ENCODE measurements at regions of chr6 and their contacts with region 1.

Region 1: DNA sequence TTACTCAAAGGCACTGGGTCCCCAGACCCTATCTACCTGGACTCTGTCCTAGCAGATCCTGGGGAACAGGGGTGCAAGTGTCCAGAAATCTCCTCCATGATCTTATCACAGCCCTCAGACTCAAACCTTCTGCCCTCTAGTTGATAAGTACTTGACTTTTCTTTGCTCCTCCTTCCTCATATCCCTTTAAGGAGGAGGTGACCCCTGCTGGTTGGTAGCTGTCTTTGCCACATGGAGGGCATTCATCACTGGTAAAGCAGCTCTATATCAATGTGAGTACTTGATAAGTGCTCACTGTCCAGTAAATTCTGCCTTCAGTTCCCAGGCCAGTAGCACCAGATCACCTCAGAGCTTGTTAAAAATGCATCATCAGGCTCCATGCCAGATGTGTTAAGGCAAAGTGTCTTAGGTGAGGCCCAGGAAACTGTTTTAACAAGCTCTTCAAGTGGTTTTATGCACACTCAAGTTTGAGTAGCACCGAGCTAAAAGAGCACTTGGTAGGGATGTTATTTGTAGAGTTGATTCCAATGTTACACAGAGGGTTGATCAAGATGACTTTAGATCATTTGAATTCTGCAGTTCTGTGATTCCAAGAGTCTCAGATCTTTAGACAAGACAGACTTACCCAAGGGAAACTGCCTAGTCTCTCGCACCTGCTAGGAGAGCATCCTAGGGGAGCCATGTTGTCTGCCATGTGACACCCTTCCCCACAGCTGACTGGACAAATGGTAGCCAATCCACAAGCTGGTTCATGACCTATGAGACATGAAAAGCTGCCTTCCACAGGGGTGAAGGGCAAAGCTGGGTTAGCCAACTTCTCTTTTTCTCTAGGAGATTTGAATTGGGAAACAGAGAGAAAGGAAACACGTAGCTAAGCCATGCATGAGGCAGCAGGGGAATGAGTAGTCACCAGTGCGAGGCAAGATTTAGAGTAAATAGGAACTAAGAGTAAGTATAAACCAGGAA is 18.6 kb downstream of the TREML2 start:
- DNase-seq: peak; percentile 55
- ATAC-seq: peak; percentile 98
- H3K4me3 ChIP-seq: no peak overlapping the region
- H3K27ac ChIP-seq: no peak overlapping the region
- H3K4me1 ChIP-seq: no peaks in the 10 kb centered on the region
- H3K27me3 ChIP-seq: peaks cover 16% of the 10 kb centered on the region; the same call in 1 of the 2 replicates
- CTCF ChIP-seq: peak; percentile 58
- POLR2A ChIP-seq: no peak
- RAD21 ChIP-seq: peak; percentile 49

Region 2: GRCh38 chr6:40755046-40755681 is 427.2 kb before region 1 on chr6:
- CTCF ChIA-PET with region 1: no interaction called
- POLR2A ChIA-PET with region 1: no interaction called
- dilution Hi-C with region 1: no loop called
- in situ Hi-C with region 1: no loop called
- intact Hi-C with region 1: no loop called
- DNase-seq: peak; percentile 56
- ATAC-seq: peak; percentile 62
- H3K4me3 ChIP-seq: no peak overlapping the region
- H3K27ac ChIP-seq: no peak overlapping the region
- H3K4me1 ChIP-seq: no peaks in the 10 kb centered on the region
- H3K27me3 ChIP-seq: no peaks in the 10 kb centered on the region; the same call in none of the 2 replicates
- CTCF ChIP-seq: 0 out of 2 replicates have a peak, but pooled peaks have one; percentile 3
- POLR2A ChIP-seq: no peak
- RAD21 ChIP-seq: no peak

Region 3: DNA sequence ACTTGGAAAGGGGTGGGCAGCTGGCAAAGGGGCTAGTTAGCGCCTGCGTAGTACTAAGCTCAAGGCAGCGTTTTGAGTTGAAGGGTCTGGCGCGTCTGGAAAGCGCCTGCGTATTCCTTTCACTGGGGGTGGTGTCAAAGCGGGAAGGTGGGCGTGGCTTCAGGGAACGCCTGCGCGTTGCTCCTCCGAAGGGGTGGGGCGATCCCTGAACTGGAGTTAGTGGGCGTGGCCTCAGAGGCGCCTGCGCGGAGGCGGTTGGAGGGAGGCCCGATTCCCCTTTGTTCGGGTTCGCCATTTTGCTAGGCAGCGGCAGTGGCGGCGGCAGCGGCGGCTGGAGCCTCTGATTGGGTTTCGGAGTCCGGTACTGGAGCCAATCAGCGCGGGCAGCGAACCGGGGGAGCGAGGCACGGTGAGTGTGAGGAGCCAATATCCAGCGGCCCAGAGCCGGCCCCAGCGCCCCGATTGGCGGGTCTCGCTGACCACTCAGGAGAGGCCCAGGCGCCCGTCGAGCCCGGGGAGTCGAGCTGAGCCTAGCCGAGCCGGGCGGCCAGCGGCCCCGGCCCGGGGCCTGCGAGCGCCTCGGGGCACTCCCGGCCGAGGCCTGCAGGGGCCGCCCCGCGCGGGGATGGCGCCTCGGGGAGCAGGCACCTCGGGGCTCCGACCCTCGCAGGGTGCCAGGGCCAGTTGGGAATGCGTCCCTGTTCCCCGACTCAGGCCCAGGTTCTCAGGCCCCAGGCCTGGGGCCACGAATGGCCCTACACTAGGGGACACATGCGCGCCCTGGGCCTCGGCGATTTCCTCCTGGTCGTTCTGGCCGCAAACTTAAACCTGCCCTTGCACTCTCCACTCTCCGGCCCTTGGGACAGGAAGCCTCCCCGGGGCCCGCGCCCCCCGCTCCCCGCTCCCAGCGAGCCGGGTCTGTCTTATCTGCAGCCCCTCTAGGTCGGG is 109.4 kb before region 1 on chr6 and contains the start of gene NFYA:
- CTCF ChIA-PET with region 1: no interaction called
- POLR2A ChIA-PET with region 1: no interaction called
- dilution Hi-C with region 1: no loop called
- in situ Hi-C with region 1: no loop called
- intact Hi-C with region 1: loop called (anchors 1 kb)
- DNase-seq: peak; percentile 99
- ATAC-seq: peak; percentile 76
- H3K4me3 ChIP-seq: peak within 1 kb of the TSS; percentile 72
- H3K27ac ChIP-seq: peak within 1 kb of the TSS; percentile 93
- H3K4me1 ChIP-seq: peaks cover 3% of the 10 kb centered on the region
- H3K27me3 ChIP-seq: no peaks in the 10 kb centered on the region
- CTCF ChIP-seq: peak; percentile 60
- POLR2A ChIP-seq: peak; percentile 88
- RAD21 ChIP-seq: peak; percentile 35; the same call in 1 of the 2 replicates
- total RNA-seq, gene NFYA: 21.9 and 28.5 TPM in 2 replicates

Region 4: DNA sequence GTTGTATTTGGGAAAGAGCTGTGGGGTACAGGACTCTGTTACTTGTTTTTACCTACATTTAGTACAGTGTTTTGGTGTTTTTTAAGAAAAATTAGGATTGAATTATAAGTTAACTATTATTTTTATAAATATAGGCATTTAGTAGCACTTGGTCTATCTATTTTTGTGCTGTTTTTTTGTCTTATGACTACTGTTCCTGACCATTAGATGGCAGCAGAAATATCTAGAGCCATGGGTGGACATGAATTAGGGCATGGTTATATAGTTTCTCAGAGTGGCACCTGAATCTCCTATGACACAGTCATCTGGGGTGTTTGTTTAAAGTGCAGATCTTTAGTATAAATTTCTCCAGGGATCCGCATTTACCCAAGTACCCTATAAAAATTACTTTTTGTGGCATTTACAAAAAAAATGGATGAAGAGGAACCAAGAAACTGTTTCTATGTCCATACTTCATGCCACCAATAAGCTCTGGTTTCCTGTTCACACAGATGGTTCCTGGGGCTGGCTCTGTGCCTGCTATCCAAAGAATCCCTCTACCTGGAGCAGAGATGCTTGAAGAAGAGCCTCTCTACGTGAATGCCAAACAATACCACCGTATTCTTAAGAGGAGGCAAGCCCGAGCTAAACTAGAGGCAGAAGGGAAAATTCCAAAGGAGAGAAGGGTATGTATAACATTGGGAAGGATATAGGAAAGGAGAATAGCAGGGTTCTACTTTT is 89.8 kb before region 1 on chr6:
- CTCF ChIA-PET with region 1: interaction called, 7 read pairs
- POLR2A ChIA-PET with region 1: no interaction called
- dilution Hi-C with region 1: no loop called
- in situ Hi-C with region 1: loop called (anchors 10 kb)
- intact Hi-C with region 1: loop called (anchors 1 kb)
- DNase-seq: peak; percentile 37
- ATAC-seq: peak; percentile 69
- H3K4me3 ChIP-seq: no peak overlapping the region
- H3K27ac ChIP-seq: no peak overlapping the region
- H3K4me1 ChIP-seq: peaks cover 5% of the 10 kb centered on the region
- H3K27me3 ChIP-seq: no peaks in the 10 kb centered on the region
- CTCF ChIP-seq: peak; percentile 47
- POLR2A ChIP-seq: no peak
- RAD21 ChIP-seq: peak; percentile 44; the same call in 1 of the 2 replicates

Measured in IMR-90 (cell line).